Activated CD4-positive, alpha-beta memory T cell treated with anti-CD3 and anti-CD28 coated beads, Interleukin-2, amount 10 ng/mL, durations not matched to agents 7 days and 5 days (primary cell): ENCODE measurements at regions of chr5 and their contacts with region 1.

Region 1: GRCh38 chr5:141564216-141564692 is 54.5 kb downstream of the DIAPH1 start:
- DNase-seq: peak; percentile 68
- H3K4me3 Mint-ChIP-seq: no peak overlapping the region
- H3K27ac Mint-ChIP-seq: peak overlapping the region; percentile 79
- H3K4me1 Mint-ChIP-seq: peaks cover 40% of the 10 kb centered on the region
- H3K27me3 Mint-ChIP-seq: no peaks in the 10 kb centered on the region

Region 2: GRCh38 chr5:141320225-141321169 is 243.8 kb before region 1 on chr5 and contains the start of gene TAF7:
- CTCF ChIA-PET with region 1: interaction called, 13 read pairs
- POLR2A ChIA-PET with region 1: interaction called, 17 read pairs
- DNase-seq: peak; percentile 93
- H3K4me3 Mint-ChIP-seq: peak within 1 kb of the TSS; percentile 97
- H3K27ac Mint-ChIP-seq: peak within 1 kb of the TSS; percentile 99
- H3K4me1 Mint-ChIP-seq: peaks cover 40% of the 10 kb centered on the region
- H3K27me3 Mint-ChIP-seq: peaks cover 1% of the 10 kb centered on the region
- total RNA-seq, gene TAF7: 74.3 to 75.1 TPM

Region 3: DNA sequence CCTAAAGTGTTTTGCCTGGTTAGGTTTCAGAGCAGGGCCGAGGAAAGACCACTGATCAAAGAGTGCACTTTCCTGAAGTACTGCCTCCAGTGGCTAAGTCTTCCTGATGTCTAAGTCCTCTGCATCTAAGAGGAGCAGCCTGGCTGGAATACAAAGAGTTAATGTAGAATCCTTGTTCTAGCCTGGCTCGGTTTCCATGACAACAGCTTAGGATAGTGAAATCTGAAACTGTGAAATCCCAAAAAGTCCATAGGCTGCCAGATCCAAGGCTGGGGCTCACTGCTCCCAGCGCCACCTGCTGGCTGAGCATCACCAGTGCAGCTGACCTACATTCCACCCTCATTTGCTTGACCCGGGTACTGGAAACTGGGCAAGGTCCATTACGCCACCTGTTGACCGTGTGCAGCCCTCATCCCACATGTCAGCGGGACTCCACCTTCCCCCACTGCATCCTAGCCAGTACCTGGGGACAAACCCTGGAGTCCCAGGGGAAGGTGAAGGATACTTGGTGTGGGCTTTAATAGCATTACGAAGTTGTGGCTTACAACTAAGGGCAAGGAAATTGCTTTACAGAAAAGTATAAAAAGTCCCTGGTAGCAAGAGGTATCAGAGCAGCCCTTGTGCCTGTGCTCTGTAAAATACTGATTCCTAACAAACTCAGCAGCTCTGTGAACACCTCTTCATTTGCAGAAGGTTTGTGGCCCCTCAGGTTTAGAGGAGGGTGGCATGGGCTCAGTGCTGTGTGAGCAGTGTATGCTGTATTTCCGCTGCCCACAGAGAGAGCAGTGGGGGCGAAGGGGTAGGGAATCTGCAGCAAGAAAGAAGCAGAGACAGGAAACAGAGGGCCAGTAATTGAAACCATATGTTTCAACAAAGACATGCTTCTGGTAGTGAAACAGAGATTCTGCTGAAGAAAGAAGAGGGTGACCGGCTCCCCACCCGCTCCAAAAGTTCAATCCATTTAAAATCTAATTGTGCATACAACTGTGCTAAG is 39.4 kb before region 1 on chr5:
- CTCF ChIA-PET with region 1: interaction called, 10 read pairs
- POLR2A ChIA-PET with region 1: no interaction called
- DNase-seq: peak; percentile 51
- H3K4me3 Mint-ChIP-seq: no peak overlapping the region
- H3K27ac Mint-ChIP-seq: no peak overlapping the region
- H3K4me1 Mint-ChIP-seq: peaks cover 25% of the 10 kb centered on the region
- H3K27me3 Mint-ChIP-seq: no peaks in the 10 kb centered on the region

Region 4: GRCh38 chr5:141547488-141547887 is 16.8 kb before region 1 on chr5:
- CTCF ChIA-PET with region 1: interaction called, 14 read pairs
- POLR2A ChIA-PET with region 1: interaction called, 3 read pairs
- DNase-seq: no peak
- H3K4me3 Mint-ChIP-seq: no peak overlapping the region
- H3K27ac Mint-ChIP-seq: no peak overlapping the region
- H3K4me1 Mint-ChIP-seq: peaks cover 2% of the 10 kb centered on the region
- H3K27me3 Mint-ChIP-seq: no peaks in the 10 kb centered on the region

Region 5: GRCh38 chr5:141605523-141606277 is 41.4 kb after region 1 on chr5:
- CTCF ChIA-PET with region 1: interaction called, 15 read pairs
- POLR2A ChIA-PET with region 1: no interaction called
- DNase-seq: peak; percentile 84
- H3K4me3 Mint-ChIP-seq: peak overlapping the region; percentile 63
- H3K27ac Mint-ChIP-seq: peak overlapping the region; percentile 94
- H3K4me1 Mint-ChIP-seq: peaks cover 78% of the 10 kb centered on the region
- H3K27me3 Mint-ChIP-seq: no peaks in the 10 kb centered on the region

Region 6: DNA sequence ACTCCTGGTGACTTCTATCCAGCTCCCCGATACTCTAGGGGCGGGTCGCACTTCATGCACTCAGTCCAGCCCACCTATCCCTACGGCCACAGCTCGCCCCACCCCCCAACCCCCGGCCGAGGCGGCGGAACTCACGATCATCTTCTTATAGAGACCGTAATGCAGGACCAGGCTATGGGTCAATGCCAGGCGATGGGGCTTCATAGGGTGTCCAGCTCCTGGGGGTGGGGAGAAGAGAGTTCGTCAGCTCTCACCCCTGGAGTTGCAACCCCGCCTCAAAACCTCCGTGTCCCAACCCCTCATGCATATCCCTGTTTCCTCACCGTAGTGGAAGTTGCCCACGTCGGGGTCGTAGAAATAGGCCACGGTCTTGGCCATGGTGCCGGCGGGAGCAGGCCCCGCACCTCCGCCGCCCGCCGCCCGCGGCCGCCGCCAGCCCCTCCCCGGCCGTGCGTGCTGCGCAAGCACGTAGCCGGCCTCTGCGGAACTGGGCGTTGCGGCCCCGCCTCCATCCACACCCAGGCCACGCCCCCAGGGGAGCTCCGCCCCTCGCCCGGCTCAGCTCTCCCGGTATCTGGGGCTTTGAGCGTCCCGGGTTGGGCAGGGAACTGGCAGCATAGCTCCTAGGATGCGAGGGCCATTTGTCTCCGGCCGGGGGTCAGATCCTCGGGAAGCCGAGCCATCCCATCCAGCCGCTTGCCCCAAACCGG is 72.3 kb after region 1 on chr5 and contains the starts of genes HDAC3 and RELL2:
- CTCF ChIA-PET with region 1: interaction called, 51 read pairs
- POLR2A ChIA-PET with region 1: interaction called, 4 read pairs
- DNase-seq: peak; percentile 94
- H3K4me3 Mint-ChIP-seq: peak within 1 kb of the TSS; percentile 93
- H3K27ac Mint-ChIP-seq: peak within 1 kb of the TSS; percentile 80
- H3K4me1 Mint-ChIP-seq: peaks cover 59% of the 10 kb centered on the region
- H3K27me3 Mint-ChIP-seq: no peaks in the 10 kb centered on the region
- total RNA-seq, gene HDAC3: 72.0 to 77.9 TPM
- total RNA-seq, gene RELL2: 18.8 to 19.4 TPM

Region 7: GRCh38 chr5:141906972-141907371 is 342.7 kb after region 1 on chr5:
- CTCF ChIA-PET with region 1: no interaction called
- POLR2A ChIA-PET with region 1: no interaction called
- DNase-seq: no peak
- H3K4me3 Mint-ChIP-seq: no peak overlapping the region
- H3K27ac Mint-ChIP-seq: no peak overlapping the region
- H3K4me1 Mint-ChIP-seq: no peaks in the 10 kb centered on the region
- H3K27me3 Mint-ChIP-seq: peaks cover 16% of the 10 kb centered on the region